Posterior cingulate gyrus (tissue), 11 donors: ENCODE measurements at regions of chr4 and their contacts with region 1.

Region 1: DNA sequence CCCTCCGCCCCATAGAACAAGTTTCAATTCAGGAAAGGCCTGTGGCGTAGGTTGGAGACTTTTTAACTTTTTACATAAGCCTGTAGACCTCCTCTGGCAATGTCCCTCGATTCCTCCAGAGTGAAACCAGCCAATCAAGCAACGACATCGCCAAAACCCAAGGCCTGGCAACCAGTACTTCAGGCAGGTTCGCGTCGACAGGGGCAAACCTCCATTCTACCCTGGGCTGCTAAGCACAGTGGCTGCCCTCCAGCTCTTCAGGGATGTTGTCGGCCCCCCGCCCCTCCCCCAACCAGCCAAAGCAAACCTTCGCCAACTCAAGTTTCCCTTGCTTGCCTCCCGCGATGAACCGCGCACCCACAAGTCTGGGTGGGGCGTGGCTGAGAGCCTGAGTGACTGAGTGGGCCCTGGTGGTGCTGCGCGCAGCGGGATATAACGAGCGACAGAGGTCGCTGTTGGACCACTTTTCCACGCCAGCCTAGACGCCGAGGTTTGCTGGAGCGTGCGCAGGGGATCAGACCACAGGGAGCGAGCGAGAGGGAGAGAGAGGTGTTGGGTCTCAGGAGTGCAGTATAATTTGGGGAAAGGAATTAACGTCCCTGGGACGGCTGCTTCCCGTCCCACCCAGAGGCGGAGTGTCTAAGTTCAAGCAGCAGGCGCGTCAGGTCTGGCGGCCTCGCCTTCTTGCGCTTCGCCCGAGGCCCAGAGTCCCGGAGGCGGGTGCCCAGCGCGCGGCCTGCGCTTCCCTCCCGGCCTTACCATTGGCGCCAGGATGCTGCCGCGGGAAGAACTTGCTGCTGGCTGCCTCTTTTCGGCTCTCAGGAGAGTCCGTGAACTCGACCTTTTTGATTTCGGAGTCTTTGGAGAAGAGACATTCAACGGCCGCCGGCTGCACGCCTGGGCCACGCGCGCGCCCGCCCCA is 9.0 kb upstream of the PITX2 start:
- DNase-seq: peak in 9 of 10 donors; percentile 35 to 94 (median 62)

Region 2: DNA sequence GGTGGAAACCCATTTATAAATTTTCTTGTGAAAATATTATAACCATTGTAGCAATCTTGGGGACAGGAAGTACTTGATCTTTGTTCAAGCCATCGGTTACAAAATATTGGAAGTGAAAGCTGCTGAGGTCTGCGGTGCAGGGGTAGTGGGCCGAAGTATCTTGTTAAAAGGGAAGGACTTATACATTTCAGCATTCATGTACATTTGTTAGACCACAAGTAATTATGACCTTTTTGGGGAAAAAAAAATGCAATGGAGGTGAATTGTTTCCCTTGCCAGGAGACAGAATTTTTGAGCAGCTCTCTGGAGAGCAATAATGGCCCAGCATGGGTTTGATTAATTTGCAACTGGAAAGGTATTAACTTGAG is 597.8 kb before region 1 on chr4:
- intact Hi-C with region 1: no loop called
- DNase-seq: no peak

Region 3: DNA sequence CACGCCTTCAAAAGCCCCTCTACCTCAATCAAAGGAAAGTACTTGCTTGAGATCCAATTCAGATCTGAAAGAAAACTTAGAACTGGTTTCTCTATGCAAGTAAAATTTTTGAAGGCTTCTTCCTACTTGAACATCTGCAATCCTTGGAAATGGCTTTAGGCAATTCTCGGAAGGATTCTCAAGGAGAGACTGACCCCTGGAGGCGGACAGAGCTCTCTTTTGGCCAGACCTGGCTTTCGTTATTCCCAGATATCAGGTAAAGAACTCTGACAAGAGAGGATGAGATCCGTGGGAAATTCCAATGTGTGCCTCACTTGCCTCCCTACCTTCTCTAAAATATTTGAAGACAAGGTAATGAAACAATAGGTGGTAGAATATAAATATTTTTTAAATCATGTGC is 843.2 kb after region 1 on chr4:
- intact Hi-C with region 1: loop called (anchors 5 kb)
- DNase-seq: peak in 6 of 10 donors; percentile 17 to 57 (median 32)

Region 4: DNA sequence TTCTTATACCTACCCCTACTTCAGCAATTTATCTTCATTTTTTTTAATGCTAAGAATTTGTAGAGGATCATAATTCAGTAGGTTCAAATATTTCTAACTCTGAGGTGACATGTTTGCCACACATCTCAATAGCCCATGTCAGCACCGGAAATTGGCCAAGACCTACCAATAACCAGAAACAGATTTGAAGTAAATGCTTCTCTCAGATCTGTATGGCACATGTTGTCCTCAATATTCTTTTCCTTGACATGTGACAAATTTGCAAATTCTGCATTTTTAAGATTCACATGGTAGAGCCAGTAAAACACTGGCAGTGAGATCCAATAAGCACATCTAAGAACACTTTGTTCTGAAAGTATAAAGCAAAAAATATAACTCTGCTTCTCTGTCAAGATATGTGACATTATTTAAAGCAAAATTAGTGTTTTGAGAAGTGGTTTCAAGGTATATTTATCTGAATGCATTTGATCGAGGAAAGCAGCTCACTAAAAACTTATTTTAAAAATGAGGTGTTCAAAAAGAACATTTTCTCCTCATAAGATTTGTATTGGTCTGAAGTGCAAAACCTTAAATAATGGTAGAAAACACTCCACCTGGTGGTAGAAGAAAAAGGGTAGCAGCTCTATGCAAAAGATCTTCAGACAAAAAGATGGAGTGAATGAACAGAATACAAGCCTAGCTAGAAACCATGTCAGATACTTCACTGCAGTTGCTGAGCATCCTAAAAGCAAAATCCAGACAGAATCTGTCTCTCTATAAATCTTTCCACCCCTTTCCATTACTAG is 999.6 kb after region 1 on chr4:
- intact Hi-C with region 1: loop called (anchors 1 kb)
- DNase-seq: no peak

Region 5: GRCh38 chr4:111854494-111855087 is 1222.7 kb after region 1 on chr4:
- intact Hi-C with region 1: loop called (anchors 10 kb)
- DNase-seq: peak in 2 of 10 donors; percentile 8 to 52

Region 6: GRCh38 chr4:112031712-112032328 is 1400.0 kb after region 1 on chr4:
- intact Hi-C with region 1: loop called (anchors 10 kb)
- DNase-seq: no peak